ENCODE measurements at regions of chr4 and their contacts with region 1.

Region 1: GRCh38 chr4:164779811-164780216 is 25.9 kb downstream of the SMIM31 start:
- DNase-seq: peak; percentile 30
- ATAC-seq: peak; percentile 73
- H3K4me3 ChIP-seq: no peak overlapping the region
- H3K27ac ChIP-seq: no peak overlapping the region
- H3K4me1 ChIP-seq: no peaks in the 10 kb centered on the region
- H3K27me3 ChIP-seq: no peaks in the 10 kb centered on the region
- CTCF ChIP-seq: peak; percentile 91 to 94 (median 94)
- EP300 ChIP-seq: no peak
- POLR2A ChIP-seq: no peak
- RAD21 ChIP-seq: peak; percentile 90

Region 2: GRCh38 chr4:164906368-164906767 is 126.6 kb after region 1 on chr4:
- CTCF ChIA-PET with region 1: interaction called, 25 read pairs
- POLR2A ChIA-PET with region 1: no interaction called
- RAD21 ChIA-PET with region 1: no interaction called
- SMC1A ChIA-PET with region 1: no interaction called
- in situ Hi-C with region 1: loop called (anchors 10 kb)
- intact Hi-C with region 1: no loop called
- DNase-seq: no peak
- ATAC-seq: no peak
- H3K4me3 ChIP-seq: no peak overlapping the region
- H3K27ac ChIP-seq: no peak overlapping the region
- H3K4me1 ChIP-seq: no peaks in the 10 kb centered on the region
- H3K27me3 ChIP-seq: no peaks in the 10 kb centered on the region
- CTCF ChIP-seq: no peak
- EP300 ChIP-seq: no peak
- POLR2A ChIP-seq: no peak
- RAD21 ChIP-seq: no peak

Region 3: DNA sequence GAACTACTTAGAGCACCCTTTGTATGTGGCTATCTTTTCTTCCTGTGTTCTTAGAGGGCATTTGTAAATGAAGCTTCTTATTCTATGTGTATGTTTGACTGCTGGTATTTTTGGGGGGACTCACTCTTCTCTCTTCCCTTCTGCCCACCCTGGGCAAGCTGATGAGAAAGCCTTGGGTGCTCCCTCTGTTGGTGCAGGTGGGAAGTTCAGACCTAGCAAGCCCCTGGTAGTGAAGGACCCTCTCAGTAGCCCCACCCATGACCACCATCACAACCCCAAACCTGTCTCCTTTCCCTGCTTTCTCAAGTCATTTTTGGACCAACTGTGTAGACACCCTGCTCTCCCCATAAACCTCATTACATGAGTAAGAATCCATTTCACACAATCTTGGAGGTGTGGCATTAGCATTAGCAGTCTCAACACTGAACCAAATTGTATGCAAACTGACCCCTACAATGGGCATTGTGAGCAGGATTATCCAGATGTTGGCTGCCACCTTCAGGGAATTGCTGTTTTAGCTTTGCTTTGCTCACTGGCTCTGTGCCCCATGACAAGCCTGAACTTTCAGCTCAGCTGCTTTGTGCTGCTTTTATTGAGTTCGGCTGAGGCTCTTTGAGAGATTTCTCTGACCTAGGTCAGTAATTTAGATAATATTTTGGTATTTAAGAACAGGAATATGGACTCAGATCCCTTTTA is 169.8 kb after region 1 on chr4:
- CTCF ChIA-PET with region 1: interaction called, 8 read pairs
- POLR2A ChIA-PET with region 1: no interaction called
- RAD21 ChIA-PET with region 1: interaction called, 5 read pairs
- SMC1A ChIA-PET with region 1: interaction called, 3 read pairs
- in situ Hi-C with region 1: no loop called
- intact Hi-C with region 1: loop called (anchors 1 kb)
- DNase-seq: no peak
- ATAC-seq: peak; percentile 75
- H3K4me3 ChIP-seq: no peak overlapping the region
- H3K27ac ChIP-seq: no peak overlapping the region
- H3K4me1 ChIP-seq: no peaks in the 10 kb centered on the region
- H3K27me3 ChIP-seq: no peaks in the 10 kb centered on the region
- CTCF ChIP-seq: peak; percentile 24 to 50 (median 39); a peak in 4 of 6 replicates
- EP300 ChIP-seq: no peak
- POLR2A ChIP-seq: no peak
- RAD21 ChIP-seq: 0 out of 2 replicates have a peak, but pooled peaks have one; percentile 16

Region 4: DNA sequence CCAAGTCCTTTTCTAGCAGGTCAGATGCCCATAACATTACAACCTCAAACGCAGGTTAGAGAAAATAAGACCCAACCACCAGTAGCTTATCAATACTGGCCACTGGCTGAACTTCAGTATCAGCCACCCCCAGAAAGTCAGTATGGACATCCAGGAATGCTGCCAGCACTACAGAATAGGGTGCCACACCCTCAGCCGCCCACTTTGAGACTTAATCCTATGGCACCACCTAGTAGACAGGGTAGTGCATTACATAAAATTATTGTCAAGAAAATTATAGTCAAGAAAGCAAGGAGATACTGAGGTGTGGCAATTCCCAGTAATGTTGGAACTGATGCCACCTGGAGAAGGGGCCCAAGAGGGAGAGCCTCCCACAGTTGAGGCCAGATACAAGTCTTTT is 217.5 kb after region 1 on chr4:
- CTCF ChIA-PET with region 1: interaction called, 5 read pairs
- POLR2A ChIA-PET with region 1: no interaction called
- RAD21 ChIA-PET with region 1: no interaction called
- SMC1A ChIA-PET with region 1: no interaction called
- in situ Hi-C with region 1: no loop called
- intact Hi-C with region 1: loop called (anchors 1 kb)
- DNase-seq: no peak
- ATAC-seq: peak; percentile 63
- H3K4me3 ChIP-seq: no peak overlapping the region
- H3K27ac ChIP-seq: no peak overlapping the region
- H3K4me1 ChIP-seq: no peaks in the 10 kb centered on the region
- H3K27me3 ChIP-seq: no peaks in the 10 kb centered on the region
- CTCF ChIP-seq: peak; percentile 25 to 40 (median 31); a peak in 3 of 6 replicates
- EP300 ChIP-seq: no peak
- POLR2A ChIP-seq: no peak
- RAD21 ChIP-seq: peak; percentile 76